ENCODE measurements at regions of chr10 and their contacts with region 1.

Region 1: GRCh38 chr10:112565434-112566053 is 118.5 kb downstream of the VTI1A start:
- DNase-seq: peak; percentile 18 to 19
- H3K4me3 ChIP-seq: no peak overlapping the region
- H3K27ac ChIP-seq: no peak overlapping the region
- H3K4me1 ChIP-seq: no peaks in the 10 kb centered on the region
- H3K27me3 ChIP-seq: no peaks in the 10 kb centered on the region
- CTCF ChIP-seq: peak; percentile 10 to 77 (median 55)
- POLR2A ChIP-seq: no peak

Region 2: DNA sequence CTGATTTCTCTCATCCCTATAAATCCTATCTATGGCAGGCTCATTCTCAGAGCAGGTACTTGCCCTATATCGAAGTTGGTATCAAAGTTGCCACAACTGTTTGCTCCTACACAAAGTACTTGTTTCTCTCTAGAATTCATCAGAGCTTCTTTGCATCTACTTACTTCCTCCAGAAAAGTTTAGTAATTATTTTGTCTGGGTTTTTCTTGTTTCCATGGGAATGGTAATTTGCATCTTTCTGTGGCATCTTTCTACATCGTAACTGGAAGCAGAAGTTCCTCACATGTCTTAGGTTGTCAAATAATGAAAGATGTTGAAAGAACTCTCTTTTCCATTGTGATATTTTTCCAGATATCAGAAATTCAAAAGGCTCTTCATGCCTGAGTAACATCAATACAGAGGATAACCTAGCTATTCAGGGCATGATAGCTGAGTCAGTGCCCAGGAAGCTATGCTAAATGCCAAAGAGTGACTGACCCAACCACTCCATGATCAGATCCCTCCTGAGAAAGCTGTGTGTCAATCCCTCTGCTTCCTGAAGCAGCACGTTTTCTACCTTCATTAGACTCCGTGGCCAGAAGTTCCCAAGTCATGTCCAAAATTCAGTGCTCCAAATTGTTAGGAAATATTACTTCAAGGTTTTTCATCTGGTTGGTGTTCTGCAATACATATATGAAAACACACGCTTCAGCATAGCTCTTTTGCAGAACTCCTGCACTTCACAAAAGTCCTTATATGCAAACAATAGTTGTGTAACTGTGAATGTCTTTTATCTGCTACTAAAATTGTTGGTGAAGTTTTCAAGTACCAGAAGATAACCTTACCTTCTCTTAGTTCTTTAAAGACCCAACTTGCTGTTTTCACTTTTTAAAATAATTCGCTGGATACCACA is 97.9 kb after region 1 on chr10:
- intact Hi-C with region 1: no loop called
- DNase-seq: no peak
- H3K4me3 ChIP-seq: no peak overlapping the region
- H3K27ac ChIP-seq: no peak overlapping the region
- H3K4me1 ChIP-seq: no peaks in the 10 kb centered on the region
- H3K27me3 ChIP-seq: no peaks in the 10 kb centered on the region
- CTCF ChIP-seq: no peak
- POLR2A ChIP-seq: no peak

Region 3: GRCh38 chr10:113385021-113385999 is 819.8 kb after region 1 on chr10:
- intact Hi-C with region 1: loop called (anchors 10 kb)
- DNase-seq: peak; percentile 88 to 93
- H3K4me3 ChIP-seq: no peak overlapping the region
- H3K27ac ChIP-seq: peak overlapping the region in 1 of 3 donors; percentile 26
- H3K4me1 ChIP-seq: peaks cover 0 to 4% of the 10 kb centered on the region in 2 donors
- H3K27me3 ChIP-seq: no peaks in the 10 kb centered on the region
- CTCF ChIP-seq: peak; percentile 52 to 96 (median 88)
- POLR2A ChIP-seq: no peak